ENCODE measurements at regions of chr15 and their contacts with region 1.

Region 1: GRCh38 chr15:55649054-55649423 is 60.9 kb upstream of the PYGO1 start:
- DNase-seq: no peak
- H3K4me3 Mint-ChIP-seq: no peak overlapping the region
- H3K27ac Mint-ChIP-seq: no peak overlapping the region
- H3K4me1 Mint-ChIP-seq: no peaks in the 10 kb centered on the region
- H3K27me3 Mint-ChIP-seq: peaks cover 2% of the 10 kb centered on the region

Region 2: GRCh38 chr15:55514414-55514850 is 134.6 kb before region 1 on chr15:
- CTCF ChIA-PET with region 1: interaction called, 3 read pairs
- POLR2A ChIA-PET with region 1: no interaction called
- intact Hi-C with region 1: loop called (anchors 5 kb)
- DNase-seq: no peak
- H3K4me3 Mint-ChIP-seq: no peak overlapping the region
- H3K27ac Mint-ChIP-seq: no peak overlapping the region
- H3K4me1 Mint-ChIP-seq: no peaks in the 10 kb centered on the region
- H3K27me3 Mint-ChIP-seq: no peaks in the 10 kb centered on the region

Region 3: DNA sequence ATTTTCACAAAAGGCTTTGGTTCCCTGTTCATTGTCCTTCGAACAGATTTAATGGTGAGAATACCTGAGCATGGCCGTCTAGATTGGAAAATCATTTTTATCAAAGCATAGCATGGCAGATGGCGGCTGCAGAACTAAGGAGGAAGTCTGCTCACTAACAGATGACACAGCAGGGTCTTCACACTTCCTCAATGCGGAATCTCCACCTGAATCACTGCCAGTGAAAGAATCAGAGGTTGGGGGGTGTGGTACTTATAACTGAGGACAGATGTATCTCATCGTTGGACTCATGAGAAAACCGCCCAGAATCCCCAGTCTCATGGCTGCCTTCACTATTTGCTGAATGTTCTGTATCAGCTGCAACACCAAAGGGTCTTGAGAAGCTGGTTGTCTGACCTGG is 29.3 kb before region 1 on chr15:
- CTCF ChIA-PET with region 1: no interaction called
- POLR2A ChIA-PET with region 1: no interaction called
- intact Hi-C with region 1: no loop called
- DNase-seq: no peak
- H3K4me3 Mint-ChIP-seq: no peak overlapping the region
- H3K27ac Mint-ChIP-seq: no peak overlapping the region
- H3K4me1 Mint-ChIP-seq: no peaks in the 10 kb centered on the region
- H3K27me3 Mint-ChIP-seq: peaks cover 10% of the 10 kb centered on the region

Region 4: DNA sequence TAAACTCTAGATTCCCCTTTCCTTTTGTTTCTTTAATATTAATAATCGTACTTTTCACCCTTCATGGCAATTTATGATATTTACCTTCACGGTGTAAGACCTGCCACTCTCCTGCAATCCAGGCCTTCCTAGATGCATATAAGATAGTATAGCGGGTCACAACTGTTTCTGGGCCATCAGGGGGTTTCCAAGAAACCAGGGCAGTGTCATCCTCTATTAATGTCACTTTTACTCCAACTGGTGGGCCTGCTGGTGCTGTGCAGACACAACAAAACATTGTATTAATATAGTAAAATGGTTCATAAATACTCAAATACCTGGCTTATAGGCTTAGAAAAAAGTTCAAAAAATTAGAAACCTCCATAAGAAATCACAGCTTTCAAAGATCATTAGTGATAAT is 12.0 kb before region 1 on chr15:
- CTCF ChIA-PET with region 1: interaction called, 10 read pairs
- POLR2A ChIA-PET with region 1: no interaction called
- intact Hi-C with region 1: no loop called
- DNase-seq: no peak
- H3K4me3 Mint-ChIP-seq: no peak overlapping the region
- H3K27ac Mint-ChIP-seq: no peak overlapping the region
- H3K4me1 Mint-ChIP-seq: no peaks in the 10 kb centered on the region
- H3K27me3 Mint-ChIP-seq: no peaks in the 10 kb centered on the region

Region 5: DNA sequence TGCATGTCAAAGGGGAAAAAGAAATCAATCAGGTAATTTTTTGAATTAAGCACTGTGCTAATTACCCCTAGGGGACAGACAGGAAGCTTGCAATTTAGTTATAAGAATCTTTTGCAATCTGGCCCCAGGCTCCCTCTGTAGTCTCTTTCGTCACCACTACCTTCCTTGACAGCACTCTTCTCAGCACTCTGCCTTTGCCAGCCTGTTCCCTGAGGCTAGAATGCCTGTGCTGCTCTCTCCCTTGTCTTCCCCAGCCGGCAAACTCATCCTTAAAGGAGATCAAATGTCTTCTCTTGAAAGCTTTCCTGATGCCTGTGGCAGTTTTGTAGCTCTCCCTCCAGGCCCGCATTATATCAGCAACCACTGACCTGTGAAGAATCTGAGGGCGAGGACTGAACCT is 126.3 kb after region 1 on chr15:
- CTCF ChIA-PET with region 1: interaction called, 17 read pairs
- POLR2A ChIA-PET with region 1: no interaction called
- intact Hi-C with region 1: loop called (anchors 2 kb)
- DNase-seq: no peak
- H3K4me3 Mint-ChIP-seq: no peak overlapping the region
- H3K27ac Mint-ChIP-seq: no peak overlapping the region
- H3K4me1 Mint-ChIP-seq: no peaks in the 10 kb centered on the region
- H3K27me3 Mint-ChIP-seq: peaks cover 11% of the 10 kb centered on the region

Region 6: GRCh38 chr15:55799291-55800212 is 150.5 kb after region 1 on chr15:
- CTCF ChIA-PET with region 1: interaction called, 4 read pairs
- POLR2A ChIA-PET with region 1: no interaction called
- intact Hi-C with region 1: loop called (anchors 1 kb)
- DNase-seq: peak; percentile 48
- H3K4me3 Mint-ChIP-seq: no peak overlapping the region
- H3K27ac Mint-ChIP-seq: no peak overlapping the region
- H3K4me1 Mint-ChIP-seq: peaks cover 2% of the 10 kb centered on the region
- H3K27me3 Mint-ChIP-seq: peaks cover 16% of the 10 kb centered on the region

Region 7: DNA sequence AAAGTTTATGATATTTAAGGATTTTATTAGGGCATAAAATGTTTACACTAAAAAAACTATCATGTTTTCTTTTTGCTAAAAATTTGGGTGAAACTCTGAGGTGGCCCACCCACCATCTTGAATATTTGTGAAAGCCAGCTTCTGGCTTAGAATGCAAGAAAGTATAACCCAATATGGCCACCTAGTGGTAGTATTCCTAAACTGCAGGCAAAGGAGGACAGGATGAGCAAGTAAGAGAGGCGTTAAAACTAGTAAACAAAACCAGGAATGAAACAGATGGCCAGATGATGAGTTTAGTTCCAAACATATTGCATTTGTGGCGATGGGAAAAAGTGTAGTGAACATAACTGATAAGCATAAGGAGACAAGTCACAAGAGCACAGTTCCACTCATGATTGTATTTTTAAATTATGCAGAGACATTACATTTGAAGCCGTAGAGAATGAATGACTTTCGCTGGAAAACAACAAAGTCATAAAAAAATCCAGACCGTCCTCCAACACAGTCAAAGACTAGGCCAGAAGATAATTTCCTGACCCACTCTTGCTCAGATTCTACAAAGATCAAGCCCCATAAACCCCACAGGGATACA is 197.2 kb after region 1 on chr15:
- CTCF ChIA-PET with region 1: interaction called, 84 read pairs
- POLR2A ChIA-PET with region 1: no interaction called
- intact Hi-C with region 1: loop called (anchors 1 kb)
- DNase-seq: peak; percentile 13
- H3K4me3 Mint-ChIP-seq: no peak overlapping the region
- H3K27ac Mint-ChIP-seq: no peak overlapping the region
- H3K4me1 Mint-ChIP-seq: peaks cover 2% of the 10 kb centered on the region
- H3K27me3 Mint-ChIP-seq: no peaks in the 10 kb centered on the region

Region 8: DNA sequence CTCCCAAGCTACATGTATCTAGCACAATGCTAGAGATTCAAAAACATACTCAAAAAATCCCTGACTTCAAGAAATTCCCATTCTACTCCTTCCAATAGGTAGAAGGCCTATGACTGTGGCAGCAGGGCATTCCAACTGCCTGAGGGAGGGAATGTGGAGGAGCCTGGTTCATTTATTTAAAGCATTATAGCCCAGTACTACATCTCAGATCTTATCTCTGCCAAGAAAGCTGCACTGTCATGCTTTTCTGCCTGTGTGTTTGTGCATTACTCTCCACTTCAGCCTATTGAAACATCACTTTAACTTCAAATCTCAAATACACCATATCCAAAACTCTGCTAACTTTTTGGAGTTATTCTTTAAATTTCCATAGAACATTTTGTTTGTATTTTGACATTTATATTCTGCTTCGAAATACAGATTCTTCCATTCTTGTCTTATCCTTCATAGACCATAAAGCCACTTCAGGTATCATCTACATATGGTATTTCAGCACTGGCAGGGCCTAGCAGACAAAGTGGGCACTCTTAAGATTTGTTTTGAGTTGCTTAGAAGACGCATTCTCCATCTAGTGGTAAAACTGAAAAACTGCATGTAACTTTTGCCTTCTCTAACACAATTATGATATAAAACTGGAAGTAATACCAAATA is 403.5 kb after region 1 on chr15:
- CTCF ChIA-PET with region 1: interaction called, 3 read pairs
- POLR2A ChIA-PET with region 1: no interaction called
- intact Hi-C with region 1: loop called (anchors 1 kb)
- DNase-seq: no peak
- H3K4me3 Mint-ChIP-seq: no peak overlapping the region
- H3K27ac Mint-ChIP-seq: no peak overlapping the region
- H3K4me1 Mint-ChIP-seq: no peaks in the 10 kb centered on the region
- H3K27me3 Mint-ChIP-seq: no peaks in the 10 kb centered on the region

Measured in activated CD4-positive, alpha-beta memory T cell treated with anti-CD3 and anti-CD28 coated beads for 36 hours (primary cell).